ENCODE measurements at regions of chr1 and their contacts with region 1.

Region 1: DNA sequence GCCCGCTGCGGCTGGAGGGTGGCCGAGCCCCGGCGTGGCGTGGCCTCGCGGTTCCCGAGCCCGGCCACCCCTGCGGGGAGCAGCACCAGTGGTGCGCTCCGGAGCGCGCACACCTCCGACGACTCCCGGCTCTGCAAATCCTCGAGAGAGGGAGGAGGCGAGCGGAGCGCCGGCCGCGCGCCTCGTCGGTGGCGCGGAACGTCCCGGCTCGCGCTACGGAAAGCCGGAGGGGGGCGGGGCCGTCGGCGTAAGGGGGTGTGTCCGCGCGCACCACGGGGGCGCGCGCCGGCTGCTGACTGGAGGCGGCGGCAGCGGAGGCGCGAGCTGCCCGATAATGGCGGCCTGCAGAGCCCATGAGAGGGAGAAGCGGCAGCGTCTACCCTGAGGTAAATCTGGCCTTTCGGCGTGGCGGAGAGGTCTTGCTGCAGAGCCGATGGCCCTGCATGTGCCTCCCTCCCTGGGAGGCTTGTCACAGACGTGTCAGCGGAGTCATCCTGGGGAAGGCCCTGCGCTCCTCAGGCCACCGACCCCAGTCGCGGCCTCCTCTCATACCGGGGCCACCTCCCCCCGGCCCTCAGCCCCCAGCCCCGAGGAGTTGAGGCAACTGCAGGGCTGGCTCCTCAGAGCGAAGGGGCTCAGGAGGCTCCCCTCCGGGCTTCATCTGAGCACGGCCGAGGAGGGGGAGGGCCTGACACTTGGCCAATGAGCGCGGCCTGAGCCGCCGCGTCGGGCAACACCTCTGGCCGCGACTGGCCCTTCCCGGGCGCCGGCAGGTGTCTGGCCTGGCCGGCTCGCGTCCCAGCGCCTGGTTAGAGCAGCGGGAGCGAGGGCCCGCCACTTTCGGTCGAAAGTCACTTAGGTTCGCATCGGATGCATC is at the start of gene PDIK1L:
- DNase-seq: peak; percentile 90 to 96 (median 96)
- H3K4me3 ChIP-seq: peak within 1 kb of the TSS; percentile 84 to 99 (median 99)
- H3K4me3 Mint-ChIP-seq: peak within 1 kb of the TSS; percentile 91 to 96
- H3K27ac ChIP-seq: peak within 1 kb of the TSS; percentile 72 to 86
- H3K27ac Mint-ChIP-seq: peak within 1 kb of the TSS; percentile 85 to 93 (median 90)
- H3K4me1 ChIP-seq: peaks cover 18 to 25% of the 10 kb centered on the region in 2 donors
- H3K4me1 Mint-ChIP-seq: peaks cover 17% of the 10 kb centered on the region
- H3K27me3 ChIP-seq: no peaks in the 10 kb centered on the region
- H3K27me3 Mint-ChIP-seq: peaks cover 0 to 3% (median 2%) of the 10 kb centered on the region in 3 donors
- CTCF ChIP-seq: no peak
- polyA plus RNA-seq, gene PDIK1L: 1.2 to 2.5 (median 2.3) TPM

Region 2: GRCh38 chr1:25754470-25755181 is 357.1 kb before region 1 on chr1:
- intact Hi-C with region 1: no loop called
- DNase-seq: no peak
- H3K4me3 ChIP-seq: no peak overlapping the region
- H3K4me3 Mint-ChIP-seq: no peak overlapping the region
- H3K27ac ChIP-seq: no peak overlapping the region
- H3K27ac Mint-ChIP-seq: no peak overlapping the region
- H3K4me1 ChIP-seq: peaks cover 0 to 5% of the 10 kb centered on the region in 2 donors
- H3K4me1 Mint-ChIP-seq: peaks cover 20% of the 10 kb centered on the region
- H3K27me3 ChIP-seq: no peaks in the 10 kb centered on the region
- H3K27me3 Mint-ChIP-seq: peaks cover 0 to 3% (median 0%) of the 10 kb centered on the region in 3 donors
- CTCF ChIP-seq: no peak

Region 3: GRCh38 chr1:25958465-25958864 is 153.3 kb before region 1 on chr1:
- intact Hi-C with region 1: no loop called
- DNase-seq: no peak
- H3K4me3 ChIP-seq: no peak overlapping the region
- H3K4me3 Mint-ChIP-seq: no peak overlapping the region
- H3K27ac ChIP-seq: no peak overlapping the region
- H3K27ac Mint-ChIP-seq: no peak overlapping the region
- H3K4me1 ChIP-seq: no peaks in the 10 kb centered on the region
- H3K4me1 Mint-ChIP-seq: no peaks in the 10 kb centered on the region
- H3K27me3 ChIP-seq: no peaks in the 10 kb centered on the region
- H3K27me3 Mint-ChIP-seq: peaks cover 0 to 2% (median 0%) of the 10 kb centered on the region in 3 donors
- CTCF ChIP-seq: no peak

Region 4: GRCh38 chr1:26126321-26127084 is 14.7 kb after region 1 on chr1:
- intact Hi-C with region 1: loop called in 1 of 2 experiments (anchors 2 kb)
- DNase-seq: peak; percentile 36 to 63 (median 57)
- H3K4me3 ChIP-seq: peak overlapping the region in 2 of 3 experiments; percentile 26 to 62
- H3K4me3 Mint-ChIP-seq: peak overlapping the region; percentile 62 to 71
- H3K27ac ChIP-seq: peak overlapping the region; percentile 69 to 77
- H3K27ac Mint-ChIP-seq: peak overlapping the region; percentile 70 to 90 (median 84)
- H3K4me1 ChIP-seq: peaks cover 61 to 74% of the 10 kb centered on the region in 2 donors
- H3K4me1 Mint-ChIP-seq: peaks cover 68% of the 10 kb centered on the region
- H3K27me3 ChIP-seq: no peaks in the 10 kb centered on the region
- H3K27me3 Mint-ChIP-seq: no peaks in the 10 kb centered on the region
- CTCF ChIP-seq: no peak

Region 5: DNA sequence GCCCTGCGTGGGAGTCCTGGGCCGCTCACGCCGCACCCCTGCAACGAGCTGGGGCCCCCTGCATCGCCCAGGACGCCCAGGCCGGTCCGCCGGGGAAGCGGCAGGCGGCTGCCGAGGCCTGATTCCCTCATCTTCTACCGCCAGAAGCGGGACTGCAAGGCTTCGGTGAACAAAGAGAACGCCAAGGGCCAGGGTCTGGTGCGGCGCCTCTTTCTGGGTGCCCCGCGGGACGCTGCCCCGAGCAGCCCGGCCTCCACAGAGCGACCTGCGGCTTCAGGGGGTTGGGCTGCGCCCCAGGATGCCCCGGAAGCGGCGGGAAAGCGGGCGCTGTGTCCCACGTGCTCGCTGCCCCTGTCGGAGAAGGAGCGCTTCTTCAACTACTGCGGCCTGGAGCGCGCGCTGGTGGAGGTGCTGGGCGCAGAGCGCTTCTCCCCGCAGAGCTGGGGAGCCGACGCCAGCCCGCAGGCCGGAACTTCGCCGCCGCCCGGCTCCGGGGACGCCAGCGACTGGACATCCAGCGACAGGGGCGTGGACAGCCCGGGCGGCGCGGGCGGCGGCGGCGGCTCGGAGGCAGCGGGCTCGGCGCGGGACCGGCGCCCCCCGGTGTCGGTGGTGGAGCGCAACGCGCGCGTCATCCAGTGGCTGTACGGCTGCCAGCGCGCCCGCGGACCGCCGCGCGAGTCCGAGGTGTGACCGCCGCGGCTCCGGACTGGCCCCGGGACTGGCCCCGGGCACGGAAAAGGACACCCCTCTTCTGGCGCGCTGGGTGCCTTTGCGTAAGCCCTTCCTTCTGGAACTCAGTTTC is 49.8 kb after region 1 on chr1:
- intact Hi-C with region 1: loop called in 1 of 2 experiments (anchors 5 kb)
- DNase-seq: peak; percentile 43 to 61 (median 47)
- H3K4me3 ChIP-seq: peak overlapping the region; percentile 26 to 75 (median 34)
- H3K4me3 Mint-ChIP-seq: peak overlapping the region; percentile 74 to 92
- H3K27ac ChIP-seq: no peak overlapping the region
- H3K27ac Mint-ChIP-seq: no peak overlapping the region
- H3K4me1 ChIP-seq: peaks cover 22 to 31% of the 10 kb centered on the region in 2 donors
- H3K4me1 Mint-ChIP-seq: peaks cover 22% of the 10 kb centered on the region
- H3K27me3 ChIP-seq: peaks cover 13 to 57% of the 10 kb centered on the region in 2 donors
- H3K27me3 Mint-ChIP-seq: peaks cover 66 to 70% (median 67%) of the 10 kb centered on the region in 3 donors
- CTCF ChIP-seq: peak; percentile 9

Region 6: DNA sequence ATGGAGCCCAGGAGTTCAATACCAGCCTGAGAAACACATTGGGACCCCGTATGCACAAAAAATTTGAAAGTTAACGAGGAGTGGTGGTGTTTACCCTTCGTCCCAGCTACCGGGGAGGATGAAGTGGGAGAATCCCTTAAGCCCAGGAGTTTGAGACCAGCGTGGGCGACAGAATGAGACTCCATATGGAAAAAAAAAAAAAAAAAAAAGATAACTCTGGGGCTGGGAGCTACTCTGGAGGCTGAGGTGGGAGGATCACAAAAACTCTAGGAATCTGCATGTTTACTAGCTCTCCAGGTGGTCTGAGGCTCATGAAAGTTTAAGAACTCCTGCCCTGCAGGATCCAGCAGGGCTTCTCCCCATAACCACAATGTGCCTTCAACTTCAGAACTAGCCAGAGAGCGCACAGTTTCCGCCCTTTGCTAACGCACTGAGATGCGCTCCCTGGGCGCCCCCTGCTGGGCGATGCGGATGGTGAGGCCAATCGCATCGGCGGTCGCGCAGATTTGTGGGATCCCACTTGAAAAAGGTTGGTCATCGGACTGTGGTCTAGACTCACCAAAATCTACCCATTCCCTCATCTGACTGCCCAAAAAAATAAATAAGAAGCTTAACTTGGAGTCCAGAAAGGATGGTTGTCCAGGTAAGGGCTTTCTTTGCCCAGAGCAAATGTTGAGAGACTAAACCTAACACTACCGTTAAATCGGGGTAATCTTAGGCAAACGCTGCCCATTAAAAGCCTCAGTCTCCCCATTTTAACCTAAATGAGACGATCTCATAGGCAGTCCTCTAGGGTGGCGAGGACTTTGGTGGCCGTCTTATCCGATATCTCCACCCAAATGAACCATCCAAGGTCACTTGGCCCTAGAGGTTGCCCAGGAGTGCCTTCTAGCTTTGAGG is 252.0 kb after region 1 on chr1:
- intact Hi-C with region 1: loop called (anchors 5 kb)
- DNase-seq: peak; percentile 66 to 74 (median 69)
- H3K4me3 ChIP-seq: no peak overlapping the region
- H3K4me3 Mint-ChIP-seq: peak overlapping the region in 1 of 2 donors; percentile 55
- H3K27ac ChIP-seq: no peak overlapping the region
- H3K27ac Mint-ChIP-seq: no peak overlapping the region
- H3K4me1 ChIP-seq: peaks cover 10 to 12% of the 10 kb centered on the region in 2 donors
- H3K4me1 Mint-ChIP-seq: peaks cover 27% of the 10 kb centered on the region
- H3K27me3 ChIP-seq: peaks cover 17 to 49% of the 10 kb centered on the region in 2 donors
- H3K27me3 Mint-ChIP-seq: peaks cover 42 to 72% (median 54%) of the 10 kb centered on the region in 3 donors
- CTCF ChIP-seq: peak; percentile 94

Region 7: DNA sequence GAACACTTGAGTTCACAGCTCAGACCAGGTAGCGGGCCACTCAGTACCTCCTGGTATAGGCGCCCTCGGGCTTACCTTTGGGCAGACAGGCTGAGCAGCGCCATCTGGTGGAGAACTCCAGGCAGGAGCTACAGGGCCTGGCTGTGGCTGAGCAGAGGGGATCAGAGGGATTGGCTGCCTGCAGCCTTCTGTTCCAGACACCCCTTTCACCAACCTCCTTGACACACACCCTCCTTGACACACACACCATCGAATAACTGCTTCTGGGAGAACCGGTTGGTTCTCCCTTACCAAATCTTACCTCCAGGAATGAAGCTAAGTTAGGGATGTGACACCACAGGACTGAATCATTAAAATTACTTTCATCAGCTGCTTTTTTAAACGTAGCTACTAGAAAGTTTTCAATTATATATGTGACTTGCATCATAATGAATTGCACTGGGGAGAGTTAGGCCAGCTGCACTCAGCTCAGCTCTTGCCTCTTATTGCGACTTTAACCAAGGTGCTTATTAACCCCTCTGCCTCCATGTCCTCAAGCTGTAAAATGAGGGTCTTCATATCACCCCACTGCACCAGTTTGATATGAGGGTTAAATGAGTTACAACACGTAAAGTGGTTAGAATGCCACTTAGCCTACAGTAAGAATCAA is 305.5 kb after region 1 on chr1:
- intact Hi-C with region 1: loop called in 1 of 2 experiments (anchors 5 kb)
- DNase-seq: peak; percentile 56 to 71 (median 68)
- H3K4me3 ChIP-seq: no peak overlapping the region
- H3K4me3 Mint-ChIP-seq: no peak overlapping the region
- H3K27ac ChIP-seq: no peak overlapping the region
- H3K27ac Mint-ChIP-seq: no peak overlapping the region
- H3K4me1 ChIP-seq: no peaks in the 10 kb centered on the region
- H3K4me1 Mint-ChIP-seq: no peaks in the 10 kb centered on the region
- H3K27me3 ChIP-seq: peaks cover 33 to 39% of the 10 kb centered on the region in 2 donors
- H3K27me3 Mint-ChIP-seq: peaks cover 37 to 58% (median 47%) of the 10 kb centered on the region in 3 donors
- CTCF ChIP-seq: peak; percentile 95